Activated T-helper 1 cell treated with anti-CD3 and anti-CD28 coated beads, Interleukin-12 subunit alpha, Interleukin-12 subunit beta, Interleukin-2, Interleukin-4 antibody, amounts not matched to agents 30 ng/mL and 10 ng/mL and 1 ng/mL, durations not matched to agents 14 hours and 24 hours and 36 hours (primary cell): ENCODE measurements at regions of chr2 and their contacts with region 1.

Region 1: DNA sequence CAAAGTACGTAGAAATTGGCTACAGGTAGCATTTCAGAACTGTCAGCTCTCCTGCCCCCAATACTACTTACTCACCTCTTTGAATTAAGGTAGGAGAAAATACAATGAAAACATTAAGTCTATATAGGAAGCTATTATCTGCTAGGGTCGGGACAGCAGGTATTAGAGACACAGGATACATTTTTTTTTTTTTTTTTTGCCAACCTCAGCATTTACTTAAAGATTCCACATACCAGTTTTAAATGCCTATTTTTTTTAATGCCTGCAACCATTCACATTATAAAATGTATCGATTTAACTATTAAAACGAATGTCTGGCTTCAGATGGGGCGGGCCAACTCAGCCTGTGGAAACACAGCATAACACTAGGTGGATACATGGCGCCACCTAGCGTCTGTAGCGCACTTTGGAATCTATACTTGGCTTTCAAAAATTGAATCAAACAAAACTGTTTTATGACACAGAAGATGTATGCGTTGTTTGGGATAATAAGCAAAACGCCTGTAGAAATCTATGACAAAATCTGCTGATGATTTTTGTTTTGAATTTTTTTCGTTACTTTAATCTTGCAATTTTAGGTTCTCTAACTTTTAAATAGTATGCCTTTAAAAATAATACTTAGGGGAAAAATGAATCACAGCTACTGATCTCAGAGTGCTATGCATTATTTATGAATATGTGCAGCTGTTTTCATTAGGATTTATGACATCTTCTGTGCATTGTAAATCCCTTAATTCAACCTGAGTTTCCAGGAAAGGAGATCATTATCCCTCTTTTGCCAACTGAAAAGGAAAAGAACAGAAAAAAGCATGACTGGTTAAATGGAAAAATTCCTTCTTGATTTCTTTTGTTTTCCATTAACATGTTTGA is 261.0 kb downstream of the NYAP2 start:
- DNase-seq: peak; percentile 43
- H3K4me3 Mint-ChIP-seq: no peak overlapping the region
- H3K27ac Mint-ChIP-seq: no peak overlapping the region
- H3K4me1 Mint-ChIP-seq: no peaks in the 10 kb centered on the region
- H3K27me3 Mint-ChIP-seq: peaks cover 18% of the 10 kb centered on the region

Region 2: GRCh38 chr2:224357098-224357901 is 1303.2 kb before region 1 on chr2:
- intact Hi-C with region 1: loop called (anchors 1 kb)
- DNase-seq: peak; percentile 35
- H3K4me3 Mint-ChIP-seq: no peak overlapping the region
- H3K27ac Mint-ChIP-seq: no peak overlapping the region
- H3K4me1 Mint-ChIP-seq: no peaks in the 10 kb centered on the region
- H3K27me3 Mint-ChIP-seq: peaks cover 9% of the 10 kb centered on the region

Region 3: DNA sequence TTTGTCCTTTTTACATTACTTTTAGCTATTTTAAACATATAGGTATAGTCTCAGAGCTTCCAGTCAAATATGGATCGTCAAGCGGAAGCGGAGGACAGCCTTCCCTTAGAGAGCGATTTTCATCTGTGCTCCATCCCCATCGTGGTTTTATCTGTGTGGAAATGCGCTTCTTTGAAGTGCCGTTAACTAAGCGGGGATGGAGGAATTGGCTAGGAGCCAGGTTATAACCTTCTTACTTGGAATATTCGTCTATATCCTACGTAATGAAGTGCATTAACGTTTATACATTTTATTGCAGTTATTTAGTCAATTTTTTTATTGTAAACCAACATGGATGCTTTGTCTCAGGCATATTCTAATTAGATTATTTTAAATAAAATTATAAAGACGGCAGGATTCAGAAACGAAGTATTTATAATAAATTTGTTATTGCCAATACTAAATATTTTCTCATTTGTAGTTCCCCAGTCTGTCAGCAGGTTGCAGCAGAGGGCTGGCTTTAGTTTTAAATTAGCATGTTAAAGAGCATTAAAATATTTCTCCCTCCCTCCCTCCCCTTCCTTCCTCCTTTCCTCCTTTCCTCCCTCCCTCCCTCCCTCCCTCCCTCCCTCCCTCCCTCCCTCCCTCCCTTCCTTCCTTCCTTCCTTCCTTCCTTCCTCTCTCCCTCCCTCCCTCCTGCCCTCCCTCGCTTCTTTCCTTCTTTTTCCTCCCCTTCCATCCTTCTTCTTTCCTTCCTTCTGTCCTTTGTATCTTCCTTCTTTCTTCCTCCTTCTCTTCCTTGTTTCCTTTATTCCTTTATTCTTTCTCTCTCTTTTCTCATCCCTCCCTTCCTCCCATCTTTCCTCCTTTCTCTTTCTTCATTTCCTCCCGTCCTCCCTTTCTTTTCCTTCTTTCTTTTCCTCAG is 537.7 kb before region 1 on chr2:
- intact Hi-C with region 1: loop called (anchors 1 kb)
- DNase-seq: no peak
- H3K4me3 Mint-ChIP-seq: no peak overlapping the region
- H3K27ac Mint-ChIP-seq: no peak overlapping the region
- H3K4me1 Mint-ChIP-seq: no peaks in the 10 kb centered on the region
- H3K27me3 Mint-ChIP-seq: peaks cover 3% of the 10 kb centered on the region

Region 4: DNA sequence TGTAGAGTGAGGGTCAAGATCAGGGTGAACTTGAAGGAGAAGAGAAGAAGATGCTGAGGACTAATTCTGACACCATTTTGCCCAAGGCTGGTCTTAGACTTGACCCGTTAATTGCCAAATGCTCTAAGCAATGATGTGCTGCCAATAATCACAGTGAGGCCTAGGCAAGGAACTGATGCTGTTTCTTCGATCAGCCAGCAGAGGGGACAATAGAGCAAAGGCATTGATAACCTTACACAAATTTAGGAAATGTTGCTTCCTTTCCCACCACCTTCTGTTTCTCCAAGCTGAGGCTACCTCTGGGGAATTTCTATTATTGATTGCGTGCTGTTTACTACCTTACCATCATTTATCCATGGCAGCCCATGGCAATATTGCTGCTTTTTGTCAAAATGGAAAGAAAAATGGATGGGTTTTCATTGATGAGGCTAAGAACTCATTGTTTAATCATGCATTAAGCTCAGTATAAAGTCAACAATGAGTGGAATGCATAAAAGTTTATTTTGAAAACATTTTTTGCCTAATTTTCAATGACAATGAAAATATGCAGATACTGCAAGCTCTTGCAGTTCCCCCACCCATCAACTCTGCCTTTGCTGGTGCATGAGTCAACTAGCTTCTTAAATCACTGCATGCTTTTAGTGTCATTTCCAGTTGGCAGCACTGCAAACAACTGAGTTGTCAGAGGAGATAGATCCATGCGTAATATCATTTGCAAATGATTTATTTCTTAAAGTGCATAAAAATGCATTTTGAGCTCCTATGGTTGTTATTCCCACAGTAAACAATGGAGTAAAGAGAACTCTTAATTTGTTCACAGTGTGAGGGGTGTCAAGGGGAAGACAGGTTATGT is 377.4 kb before region 1 on chr2:
- intact Hi-C with region 1: loop called (anchors 1 kb)
- DNase-seq: no peak
- H3K4me3 Mint-ChIP-seq: no peak overlapping the region
- H3K27ac Mint-ChIP-seq: no peak overlapping the region
- H3K4me1 Mint-ChIP-seq: no peaks in the 10 kb centered on the region
- H3K27me3 Mint-ChIP-seq: peaks cover 7% of the 10 kb centered on the region